ENCODE measurements at regions of chr7 and their contacts with region 1.

Region 1: DNA sequence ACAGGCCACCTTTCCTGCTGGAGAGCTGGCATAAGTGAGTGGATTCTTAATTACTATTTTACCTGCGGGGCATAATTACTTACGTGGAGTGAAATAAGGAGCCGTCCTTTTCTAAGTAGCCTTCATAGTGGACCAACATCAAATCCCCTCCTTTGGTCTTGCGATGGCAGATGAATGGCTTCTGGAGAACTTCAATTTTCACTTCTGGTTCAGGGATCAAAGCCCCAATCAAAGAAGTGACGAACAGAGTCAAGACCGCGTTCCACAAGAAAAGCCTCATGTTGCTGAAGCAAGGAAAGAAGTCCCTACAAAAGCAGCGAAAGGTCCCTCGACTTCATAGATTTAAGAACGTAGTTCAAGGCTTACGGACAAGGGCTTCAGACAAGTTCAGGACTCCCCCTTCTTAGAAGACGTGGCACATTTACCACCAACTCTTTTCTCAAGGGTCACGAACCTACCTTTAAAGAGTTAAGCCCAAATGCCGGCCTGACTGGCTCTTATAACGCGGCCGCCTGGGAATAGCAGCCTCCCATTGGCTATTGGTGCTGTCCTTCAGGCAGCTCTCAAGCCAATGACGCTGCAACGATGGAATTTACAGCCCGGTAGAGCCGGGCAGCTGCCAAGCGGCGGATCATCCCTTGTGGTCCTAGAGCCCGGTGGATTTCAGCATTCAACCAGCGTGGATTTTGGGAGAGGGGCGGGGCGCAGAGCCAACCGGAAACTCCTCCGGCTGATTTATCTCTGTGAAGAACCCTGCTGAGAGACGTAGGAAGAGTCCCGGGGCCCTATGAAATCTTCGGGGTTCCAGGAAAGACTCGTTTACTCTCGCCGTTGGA is at the start of gene FKBP14:
- DNase-seq: peak; percentile 94 to 99 (median 96)

Region 2: DNA sequence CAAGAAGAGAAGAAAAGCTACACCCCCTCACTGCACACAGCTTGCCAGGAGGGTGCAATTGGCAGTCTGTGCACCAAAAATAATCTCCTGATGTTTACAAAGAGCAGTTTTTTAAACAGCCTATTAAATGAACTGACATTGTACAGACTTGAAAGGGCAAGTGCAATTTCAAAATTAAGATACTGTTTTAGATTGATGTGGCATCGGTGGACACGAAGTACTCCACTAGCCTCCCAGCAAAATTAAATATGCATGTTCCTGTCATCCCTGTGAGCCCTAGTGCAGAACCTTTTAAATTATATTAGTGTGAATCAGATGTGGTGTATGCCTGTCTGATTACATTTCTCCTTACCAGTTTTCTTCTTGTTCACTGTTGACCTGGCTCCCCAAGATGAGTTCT is 132.2 kb before region 1 on chr7:
- intact Hi-C with region 1: no loop called
- DNase-seq: no peak

Region 3: DNA sequence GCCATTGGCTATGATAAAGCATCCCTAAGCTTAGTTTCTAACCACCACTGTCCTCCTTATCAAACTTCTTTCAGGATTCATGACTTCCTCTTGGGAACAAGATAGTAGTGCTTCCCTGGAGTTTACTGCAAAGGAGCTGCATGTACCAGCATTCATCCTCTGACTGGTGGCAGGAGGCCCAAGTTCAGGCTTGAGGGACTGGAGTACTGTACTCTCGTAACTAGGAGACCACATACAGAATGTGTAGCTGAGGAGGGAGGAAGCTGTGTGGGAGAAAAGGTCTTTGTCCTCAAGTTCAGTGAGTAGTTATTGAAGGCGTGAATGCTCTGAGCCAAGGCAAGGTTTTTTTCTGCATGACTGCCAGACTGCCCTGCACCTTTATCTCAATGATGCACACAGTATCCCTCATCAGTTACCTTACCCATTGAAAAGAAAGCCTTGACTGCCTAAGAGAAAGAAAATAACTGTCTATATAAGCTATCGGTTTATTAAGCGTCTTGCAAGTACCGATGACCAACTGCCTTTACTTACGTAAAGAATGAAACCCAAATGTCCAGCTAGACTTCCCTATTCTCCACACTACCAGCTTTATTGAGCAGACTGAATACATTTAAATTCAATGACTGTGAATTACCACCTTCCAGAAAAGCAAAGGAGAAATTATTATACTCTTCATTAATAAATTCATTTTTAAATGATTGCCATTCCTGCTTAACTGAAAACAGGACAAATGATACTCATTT is 49.6 kb before region 1 on chr7:
- intact Hi-C with region 1: loop called (anchors 10 kb)
- DNase-seq: peak in 7 of 10 donors; percentile 20 to 89 (median 49)

Region 4: DNA sequence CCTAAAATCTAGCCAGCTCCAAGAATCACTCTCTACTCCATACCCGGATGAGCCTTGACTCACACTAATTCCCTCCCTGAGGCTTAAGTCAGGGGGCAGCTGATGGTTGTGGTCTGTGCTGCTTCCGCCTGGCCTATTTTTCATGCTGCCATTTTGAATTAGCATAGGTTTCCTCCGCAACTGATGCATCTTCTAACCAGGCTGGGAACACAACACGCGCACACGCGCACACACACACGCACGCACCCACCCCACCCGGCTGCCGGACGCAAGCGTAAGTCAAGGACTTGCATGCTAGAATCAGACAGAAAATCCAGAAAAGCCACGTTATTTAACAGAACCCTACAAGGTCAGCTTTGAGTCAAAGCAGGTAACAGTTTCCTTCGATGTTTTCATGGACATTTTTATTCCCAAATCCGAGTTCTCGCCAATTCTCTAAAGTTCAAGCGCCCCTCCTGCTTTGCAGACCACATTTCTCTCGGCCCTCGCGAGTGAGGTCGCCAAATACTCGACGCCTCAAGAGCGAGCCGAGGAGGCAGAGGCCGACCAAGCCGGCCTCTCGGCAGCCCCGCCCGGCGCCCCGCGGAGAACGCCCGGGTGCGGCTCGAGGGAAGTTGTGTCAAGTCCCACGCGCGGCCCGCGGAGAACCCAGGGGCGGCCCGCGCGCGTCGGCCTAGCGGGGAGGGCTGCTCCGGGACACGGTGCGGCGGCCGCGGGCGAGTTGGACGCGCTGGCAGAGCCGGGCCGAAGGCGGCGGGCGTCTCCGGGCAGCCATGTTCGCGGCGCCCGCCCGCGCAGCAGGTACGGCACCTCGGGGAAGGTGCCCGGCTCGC is 37.8 kb before region 1 on chr7:
- intact Hi-C with region 1: loop called (anchors 1 kb)
- DNase-seq: peak; percentile 29 to 93 (median 58)

Region 5: DNA sequence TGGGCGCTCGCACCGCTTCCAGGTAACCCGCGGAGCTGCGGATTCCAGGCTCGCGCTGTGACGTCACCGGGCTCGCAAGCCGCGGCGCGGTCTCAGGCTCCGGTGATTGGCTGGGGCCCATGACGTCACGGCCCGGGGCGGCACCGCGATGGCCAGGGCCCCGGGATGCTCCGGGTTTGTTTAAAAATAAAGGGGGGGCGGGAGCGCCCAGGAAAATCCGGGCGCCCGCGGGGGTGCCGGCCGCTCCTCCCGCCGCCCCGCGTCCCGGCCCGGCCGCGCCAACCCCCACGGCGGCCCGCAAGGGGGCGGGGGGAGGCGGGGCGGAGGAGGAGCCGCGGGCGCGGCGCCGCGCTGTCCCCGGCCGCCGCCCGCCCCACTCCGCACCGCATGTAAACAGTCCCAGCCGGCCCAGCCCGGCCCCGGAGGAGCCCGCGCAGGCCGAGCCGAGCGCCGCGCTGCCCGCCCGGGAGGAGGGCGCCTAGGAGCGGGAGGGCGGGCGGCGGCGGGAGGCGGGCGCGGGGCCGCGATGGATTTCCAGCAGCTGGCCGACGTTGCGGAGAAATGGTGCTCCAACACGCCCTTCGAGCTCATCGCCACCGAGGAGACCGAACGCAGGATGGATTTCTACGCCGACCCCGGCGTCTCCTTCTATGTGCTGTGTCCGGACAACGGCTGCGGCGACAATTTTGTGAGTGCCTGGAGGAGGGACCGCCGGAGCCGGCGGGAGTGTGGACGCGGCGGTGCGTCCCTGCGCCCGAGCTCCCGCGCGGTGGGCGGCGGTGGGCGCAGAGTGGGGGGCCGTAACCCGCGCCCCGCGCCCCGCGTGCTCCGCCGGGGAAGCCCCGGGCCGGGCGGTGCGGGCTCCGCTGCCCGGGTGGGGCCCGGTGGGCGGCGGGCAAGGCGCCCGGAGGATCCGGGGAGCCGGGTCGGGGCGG is 108.4 kb after region 1 on chr7 and contains the start of gene MTURN:
- intact Hi-C with region 1: loop called (anchors 5 kb)
- DNase-seq: peak; percentile 79 to 99 (median 90)

Measured in posterior cingulate gyrus (tissue), 11 donors.